ENCODE measurements at regions of chr13 and their contacts with region 1.

Region 1: GRCh38 chr13:77389625-77390000 is 62.7 kb upstream of the MYCBP2 start:
- DNase-seq: no peak
- CTCF ChIP-seq: no peak

Region 2: GRCh38 chr13:77409412-77409811 is 19.8 kb after region 1 on chr13:
- CTCF ChIA-PET with region 1: interaction called, 10 read pairs
- POLR2A ChIA-PET with region 1: no interaction called
- DNase-seq: no peak
- CTCF ChIP-seq: no peak

Measured in GM10248 (cell line).